Endothelial cell of umbilical vein (primary cell): ENCODE measurements at regions of chr2 and their contacts with region 1.

Region 1: DNA sequence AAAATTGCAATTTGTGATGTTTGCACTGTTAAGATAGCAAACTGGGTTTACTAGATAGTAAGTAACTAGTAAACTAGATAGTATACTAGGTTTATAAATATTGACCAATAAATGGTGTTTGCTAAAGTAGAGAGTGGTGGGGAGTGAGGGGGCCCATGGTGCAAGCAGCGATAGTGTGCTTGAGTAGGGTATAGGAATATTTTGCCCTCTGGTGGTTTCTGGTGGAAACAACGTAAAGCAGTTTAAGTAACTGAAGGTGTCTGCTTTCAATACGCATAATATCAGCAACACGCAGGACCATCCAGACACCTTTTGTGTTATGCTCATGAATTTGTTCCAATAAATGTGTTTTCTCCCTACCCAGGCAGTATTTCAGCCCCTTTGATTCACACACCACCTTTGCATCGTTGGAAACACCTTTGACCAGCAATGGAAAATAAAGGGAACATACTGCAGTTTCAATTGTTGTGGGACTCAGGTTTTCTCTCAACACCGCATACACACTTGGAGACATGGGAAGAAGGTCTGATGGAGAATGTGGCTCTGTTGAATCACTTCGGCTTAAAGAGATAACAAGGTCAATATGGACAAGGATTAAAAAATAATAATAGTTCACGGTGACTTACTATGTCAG is 16.7 kb upstream of the STAT1 start:
- DNase-seq: peak; percentile 78
- H3K4me3 ChIP-seq: peak overlapping the region in 1 of 3 experiments; percentile 10
- H3K27ac ChIP-seq: peak overlapping the region; percentile 81
- H3K4me1 ChIP-seq: peaks cover 36% of the 10 kb centered on the region
- H3K27me3 ChIP-seq: no peaks in the 10 kb centered on the region
- CTCF ChIP-seq: peak; percentile 50 to 58
- POLR2A ChIP-seq: no peak

Region 2: DNA sequence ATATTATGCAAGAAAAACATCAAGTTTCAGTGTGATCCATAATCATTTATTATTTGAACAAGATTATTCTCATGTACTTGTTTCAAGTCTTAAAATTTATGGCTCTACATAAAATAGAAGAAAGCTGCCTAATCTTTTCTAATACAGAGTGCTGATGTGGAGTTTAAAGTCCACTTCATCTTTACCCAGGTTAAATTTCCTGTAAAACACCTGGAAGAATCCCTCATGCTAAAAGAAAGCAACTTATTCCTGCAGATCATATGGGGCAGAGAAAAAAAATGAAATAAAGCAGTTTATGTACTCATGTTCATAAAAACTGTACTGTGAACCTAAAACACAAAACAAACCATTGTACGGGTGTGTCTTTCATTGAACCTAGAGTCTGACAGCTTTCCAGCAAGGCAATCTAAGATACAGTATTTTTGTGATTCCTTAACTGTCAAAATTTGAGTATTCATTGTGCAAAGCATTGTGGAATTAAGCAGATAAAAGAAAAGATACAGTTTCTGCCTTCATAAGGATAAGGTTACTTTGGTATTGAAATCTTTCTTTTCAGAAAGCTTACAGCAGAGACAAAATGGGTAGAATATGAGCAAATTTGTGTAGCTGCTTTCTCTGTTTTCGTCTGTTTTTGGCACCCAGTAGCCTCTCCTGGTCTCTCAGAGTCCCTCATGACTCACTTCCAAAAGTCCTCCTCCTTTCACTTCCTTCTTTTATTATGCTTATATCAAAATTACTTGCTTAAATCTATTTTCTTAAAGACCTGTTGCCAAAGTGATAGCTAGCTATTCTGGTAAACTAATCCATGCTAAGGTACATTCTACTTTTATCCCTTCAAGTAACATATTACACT is 176.9 kb before region 1 on chr2:
- CTCF ChIA-PET with region 1: interaction called, 8 read pairs
- POLR2A ChIA-PET with region 1: no interaction called
- dilution Hi-C with region 1: no loop called
- intact Hi-C with region 1: loop called (anchors 2 kb)
- DNase-seq: peak; percentile 54
- H3K4me3 ChIP-seq: no peak overlapping the region
- H3K27ac ChIP-seq: no peak overlapping the region
- H3K4me1 ChIP-seq: peaks cover 9% of the 10 kb centered on the region
- H3K27me3 ChIP-seq: no peaks in the 10 kb centered on the region
- CTCF ChIP-seq: no peak
- POLR2A ChIP-seq: no peak

Region 3: GRCh38 chr2:190979906-190980629 is 50.6 kb before region 1 on chr2:
- CTCF ChIA-PET with region 1: no interaction called
- POLR2A ChIA-PET with region 1: no interaction called
- dilution Hi-C with region 1: no loop called
- intact Hi-C with region 1: loop called (anchors 1 kb)
- DNase-seq: peak; percentile 99
- H3K4me3 ChIP-seq: peak overlapping the region in 1 of 3 experiments; percentile 5
- H3K27ac ChIP-seq: peak overlapping the region; percentile 87
- H3K4me1 ChIP-seq: peaks cover 57% of the 10 kb centered on the region
- H3K27me3 ChIP-seq: no peaks in the 10 kb centered on the region
- CTCF ChIP-seq: no peak
- POLR2A ChIP-seq: peak; percentile 13

Region 4: GRCh38 chr2:191003405-191004309 is 27.0 kb before region 1 on chr2:
- CTCF ChIA-PET with region 1: no interaction called
- POLR2A ChIA-PET with region 1: no interaction called
- dilution Hi-C with region 1: no loop called
- intact Hi-C with region 1: no loop called
- DNase-seq: no peak
- H3K4me3 ChIP-seq: no peak overlapping the region
- H3K27ac ChIP-seq: no peak overlapping the region
- H3K4me1 ChIP-seq: no peaks in the 10 kb centered on the region
- H3K27me3 ChIP-seq: no peaks in the 10 kb centered on the region
- CTCF ChIP-seq: no peak
- POLR2A ChIP-seq: no peak

Region 5: GRCh38 chr2:191013932-191014652 is 16.5 kb before region 1 on chr2 and contains the start of gene STAT1:
- CTCF ChIA-PET with region 1: interaction called, 4 read pairs
- POLR2A ChIA-PET with region 1: no interaction called
- dilution Hi-C with region 1: no loop called
- intact Hi-C with region 1: loop called (anchors 1 kb)
- DNase-seq: peak; percentile 92
- H3K4me3 ChIP-seq: peak within 1 kb of the TSS; percentile 50 to 94 (median 78)
- H3K27ac ChIP-seq: peak within 1 kb of the TSS; percentile 64
- H3K4me1 ChIP-seq: peaks cover 16% of the 10 kb centered on the region
- H3K27me3 ChIP-seq: no peaks in the 10 kb centered on the region
- CTCF ChIP-seq: no peak
- POLR2A ChIP-seq: peak; percentile 96
- total RNA-seq, gene STAT1: 59.2 and 67.6 TPM in 2 replicates

Region 6: GRCh38 chr2:191566344-191566743 is 535.7 kb after region 1 on chr2:
- CTCF ChIA-PET with region 1: no interaction called
- POLR2A ChIA-PET with region 1: no interaction called
- dilution Hi-C with region 1: no loop called
- intact Hi-C with region 1: no loop called
- DNase-seq: peak; percentile 54
- H3K4me3 ChIP-seq: no peak overlapping the region
- H3K27ac ChIP-seq: no peak overlapping the region
- H3K4me1 ChIP-seq: peaks cover 3% of the 10 kb centered on the region
- H3K27me3 ChIP-seq: peaks cover 6 to 16% of the 10 kb centered on the region in 2 experiments
- CTCF ChIP-seq: peak; percentile 64 to 82
- POLR2A ChIP-seq: no peak